ENCODE measurements at regions of chr22 and their contacts with region 1.

Region 1: GRCh38 chr22:37199103-37199759 is 11.2 kb upstream of the C1QTNF6 start:
- DNase-seq: peak; percentile 100
- H3K4me3 Mint-ChIP-seq: peak overlapping the region; percentile 85
- H3K27ac Mint-ChIP-seq: peak overlapping the region; percentile 96
- H3K4me1 Mint-ChIP-seq: peaks cover 44% of the 10 kb centered on the region
- H3K27me3 Mint-ChIP-seq: no peaks in the 10 kb centered on the region

Region 2: GRCh38 chr22:36699915-36700314 is 499.3 kb before region 1 on chr22:
- CTCF ChIA-PET with region 1: no interaction called
- POLR2A ChIA-PET with region 1: no interaction called
- intact Hi-C with region 1: no loop called
- DNase-seq: no peak
- H3K4me3 Mint-ChIP-seq: no peak overlapping the region
- H3K27ac Mint-ChIP-seq: no peak overlapping the region
- H3K4me1 Mint-ChIP-seq: peaks cover 3% of the 10 kb centered on the region
- H3K27me3 Mint-ChIP-seq: peaks cover 43% of the 10 kb centered on the region

Region 3: GRCh38 chr22:36781656-36782627 is 417.3 kb before region 1 on chr22:
- CTCF ChIA-PET with region 1: interaction called, 4 read pairs
- POLR2A ChIA-PET with region 1: no interaction called
- intact Hi-C with region 1: loop called (anchors 1 kb)
- DNase-seq: peak; percentile 96
- H3K4me3 Mint-ChIP-seq: peak overlapping the region; percentile 49
- H3K27ac Mint-ChIP-seq: peak overlapping the region; percentile 76
- H3K4me1 Mint-ChIP-seq: peaks cover 32% of the 10 kb centered on the region
- H3K27me3 Mint-ChIP-seq: peaks cover 1% of the 10 kb centered on the region

Region 4: DNA sequence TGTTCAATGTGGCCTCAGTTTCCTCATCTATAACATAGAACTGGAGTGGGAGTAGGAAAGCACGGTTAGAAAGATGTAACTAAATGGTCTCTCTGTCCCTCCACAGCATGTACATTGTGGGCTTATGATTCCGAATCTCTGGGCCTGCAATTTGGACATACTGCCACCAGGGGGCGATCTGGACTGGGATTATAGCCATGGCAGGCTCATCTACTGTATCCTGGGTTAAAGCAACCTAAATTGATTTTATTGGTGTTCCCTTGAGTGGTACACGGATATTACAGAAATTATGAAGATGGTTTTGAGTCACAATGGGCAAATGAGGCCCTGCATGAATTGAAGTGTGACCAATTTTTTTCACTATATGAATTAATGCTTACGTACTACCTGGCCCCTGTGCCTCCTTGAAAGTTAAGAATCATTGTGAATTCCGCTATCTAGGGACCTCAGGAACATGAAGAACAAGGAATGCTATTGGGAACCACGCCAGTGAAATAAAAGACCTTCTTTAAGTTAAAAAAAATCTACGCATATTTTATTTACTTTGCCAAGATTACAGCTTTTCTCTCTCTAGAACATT is 212.9 kb before region 1 on chr22:
- CTCF ChIA-PET with region 1: interaction called, 5 read pairs
- POLR2A ChIA-PET with region 1: no interaction called
- intact Hi-C with region 1: loop called (anchors 2 kb)
- DNase-seq: peak; percentile 80
- H3K4me3 Mint-ChIP-seq: no peak overlapping the region
- H3K27ac Mint-ChIP-seq: no peak overlapping the region
- H3K4me1 Mint-ChIP-seq: peaks cover 14% of the 10 kb centered on the region
- H3K27me3 Mint-ChIP-seq: peaks cover 20% of the 10 kb centered on the region

Region 5: GRCh38 chr22:37077884-37078485 is 121.2 kb before region 1 on chr22:
- CTCF ChIA-PET with region 1: interaction called, 79 read pairs
- POLR2A ChIA-PET with region 1: interaction called, 5 read pairs
- intact Hi-C with region 1: loop called (anchors 1 kb)
- DNase-seq: peak; percentile 91
- H3K4me3 Mint-ChIP-seq: peak overlapping the region; percentile 49
- H3K27ac Mint-ChIP-seq: peak overlapping the region; percentile 91
- H3K4me1 Mint-ChIP-seq: peaks cover 52% of the 10 kb centered on the region
- H3K27me3 Mint-ChIP-seq: peaks cover 4% of the 10 kb centered on the region

Region 6: DNA sequence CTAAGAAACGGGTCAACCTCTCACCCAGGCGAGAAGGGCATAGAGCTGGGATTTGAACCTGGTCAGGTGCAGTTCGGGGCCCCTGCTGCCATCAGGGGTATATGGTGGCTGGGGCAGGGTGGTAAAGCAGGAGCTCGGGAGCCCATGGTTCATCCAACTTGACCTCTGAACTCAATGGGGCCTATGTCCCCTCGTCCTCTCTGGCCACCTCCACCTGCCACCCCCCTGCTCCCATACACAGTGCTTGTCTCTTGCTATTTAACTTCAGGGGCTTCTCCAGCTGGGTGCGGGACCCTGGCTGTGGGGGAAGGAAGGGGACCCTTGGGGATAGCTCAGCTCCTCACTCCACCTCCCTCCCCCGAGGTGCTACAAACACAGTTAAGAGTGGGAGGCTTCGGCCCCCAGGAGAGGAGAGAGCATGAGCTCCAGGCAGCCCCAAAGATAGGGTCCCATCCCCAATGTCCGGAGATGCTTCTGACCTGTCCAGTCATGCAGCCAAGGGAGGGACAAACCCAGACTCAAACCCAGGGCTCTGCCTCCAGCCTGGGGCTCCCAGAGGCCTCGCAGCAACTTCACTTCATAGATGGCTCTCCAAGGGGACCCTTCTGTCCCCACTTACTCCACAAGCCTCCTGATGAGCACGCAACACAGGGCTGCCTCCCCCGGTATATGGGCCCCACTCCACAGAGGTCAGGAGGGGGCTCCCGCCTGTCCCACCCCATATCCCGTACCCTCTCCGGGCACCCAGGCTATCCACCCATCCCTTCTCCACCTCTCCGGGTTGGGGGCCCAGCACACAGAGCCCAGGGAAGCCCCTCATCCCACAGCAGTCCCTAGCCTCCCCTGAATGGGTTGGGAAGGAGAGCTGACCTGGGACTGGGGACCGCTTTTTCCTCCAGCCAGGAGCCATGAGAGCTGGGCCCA is 50.2 kb before region 1 on chr22:
- CTCF ChIA-PET with region 1: interaction called, 30 read pairs
- POLR2A ChIA-PET with region 1: interaction called, 10 read pairs
- intact Hi-C with region 1: loop called (anchors 1 kb)
- DNase-seq: no peak
- H3K4me3 Mint-ChIP-seq: peak overlapping the region; percentile 95
- H3K27ac Mint-ChIP-seq: peak overlapping the region; percentile 95
- H3K4me1 Mint-ChIP-seq: peaks cover 56% of the 10 kb centered on the region
- H3K27me3 Mint-ChIP-seq: no peaks in the 10 kb centered on the region

Region 7: GRCh38 chr22:37210041-37210803 is 11.0 kb after region 1 on chr22:
- CTCF ChIA-PET with region 1: interaction called, 12 read pairs
- POLR2A ChIA-PET with region 1: interaction called, 5 read pairs
- intact Hi-C with region 1: no loop called
- DNase-seq: no peak
- H3K4me3 Mint-ChIP-seq: no peak overlapping the region
- H3K27ac Mint-ChIP-seq: peak overlapping the region; percentile 13
- H3K4me1 Mint-ChIP-seq: peaks cover 15% of the 10 kb centered on the region
- H3K27me3 Mint-ChIP-seq: no peaks in the 10 kb centered on the region

Region 8: DNA sequence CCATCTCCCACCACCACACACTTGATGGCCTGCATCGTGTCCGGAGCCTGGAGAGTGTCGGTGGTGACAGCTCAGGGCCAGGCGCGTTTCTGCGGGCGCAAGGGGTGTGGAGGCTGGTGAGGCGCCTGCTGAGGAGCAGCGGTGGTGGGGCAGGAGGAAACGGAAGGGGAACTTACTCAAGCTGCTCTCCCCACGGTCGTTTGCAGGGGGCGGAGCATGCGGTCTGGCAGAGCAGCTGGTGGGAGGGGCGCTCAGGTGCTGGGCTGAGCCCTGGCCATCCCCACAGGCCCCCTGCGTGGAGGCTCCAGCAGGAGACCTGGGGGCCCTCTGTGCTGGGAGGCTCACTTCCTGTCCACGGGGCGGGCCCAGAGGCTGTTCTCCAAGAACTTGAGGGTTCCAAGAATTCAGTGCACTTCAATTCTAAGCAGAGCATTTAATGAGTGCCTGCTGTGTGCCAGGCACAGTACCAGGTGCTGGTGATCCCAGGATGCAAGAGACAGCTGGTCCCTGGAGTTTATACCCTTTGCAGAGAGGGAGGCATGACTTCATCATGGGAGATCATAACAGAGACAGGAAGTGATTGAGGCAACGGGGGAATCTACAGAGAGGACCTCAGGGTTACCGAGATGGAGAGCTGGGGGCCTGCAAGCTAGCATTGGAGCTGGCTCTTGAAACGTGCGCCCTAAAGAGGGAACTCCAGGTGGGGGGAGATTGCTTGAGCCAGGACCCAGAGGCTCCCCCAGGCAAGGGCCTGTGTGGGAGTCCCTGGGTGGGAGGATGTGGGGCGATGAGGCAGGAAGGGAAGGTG is 45.1 kb after region 1 on chr22 and contains the start of gene RAC2:
- CTCF ChIA-PET with region 1: interaction called, 29 read pairs
- POLR2A ChIA-PET with region 1: interaction called, 5 read pairs
- intact Hi-C with region 1: loop called (anchors 2 kb)
- DNase-seq: peak; percentile 96
- H3K4me3 Mint-ChIP-seq: peak within 1 kb of the TSS; percentile 99
- H3K27ac Mint-ChIP-seq: peak within 1 kb of the TSS; percentile 99
- H3K4me1 Mint-ChIP-seq: peaks cover 42% of the 10 kb centered on the region
- H3K27me3 Mint-ChIP-seq: no peaks in the 10 kb centered on the region
- total RNA-seq, gene RAC2: 714 to 727 TPM

Region 9: GRCh38 chr22:37334859-37335805 is 135.9 kb after region 1 on chr22:
- CTCF ChIA-PET with region 1: no interaction called
- POLR2A ChIA-PET with region 1: no interaction called
- intact Hi-C with region 1: no loop called
- DNase-seq: no peak
- H3K4me3 Mint-ChIP-seq: no peak overlapping the region
- H3K27ac Mint-ChIP-seq: no peak overlapping the region
- H3K4me1 Mint-ChIP-seq: peaks cover 9% of the 10 kb centered on the region
- H3K27me3 Mint-ChIP-seq: peaks cover 42% of the 10 kb centered on the region

Measured in activated CD4-positive, alpha-beta memory T cell treated with anti-CD3 and anti-CD28 coated beads for 36 hours (primary cell).